Ovary (tissue), 10 donors: ENCODE measurements at regions of chr16 and their contacts with region 1.

Region 1: GRCh38 chr16:13397126-13397525 is 495.7 kb downstream of the SHISA9 start:
- DNase-seq: no peak
- H3K4me3 ChIP-seq: no peak overlapping the region
- H3K27ac ChIP-seq: no peak overlapping the region
- H3K4me1 ChIP-seq: no peaks in the 10 kb centered on the region
- H3K27me3 ChIP-seq: no peaks in the 10 kb centered on the region
- CTCF ChIP-seq: no peak
- EP300 ChIP-seq: no peak
- POLR2A ChIP-seq: no peak

Region 2: GRCh38 chr16:13351181-13351933 is 45.8 kb before region 1 on chr16:
- intact Hi-C with region 1: loop called in 1 of 4 experiments (anchors 1 kb)
- DNase-seq: no peak
- H3K4me3 ChIP-seq: no peak overlapping the region
- H3K27ac ChIP-seq: no peak overlapping the region
- H3K4me1 ChIP-seq: no peaks in the 10 kb centered on the region
- H3K27me3 ChIP-seq: no peaks in the 10 kb centered on the region
- CTCF ChIP-seq: no peak
- EP300 ChIP-seq: no peak
- POLR2A ChIP-seq: no peak

Region 3: GRCh38 chr16:13471036-13471435 is 73.9 kb after region 1 on chr16:
- intact Hi-C with region 1: no loop called
- DNase-seq: no peak
- H3K4me3 ChIP-seq: no peak overlapping the region
- H3K27ac ChIP-seq: no peak overlapping the region
- H3K4me1 ChIP-seq: no peaks in the 10 kb centered on the region
- H3K27me3 ChIP-seq: no peaks in the 10 kb centered on the region
- CTCF ChIP-seq: no peak
- EP300 ChIP-seq: no peak
- POLR2A ChIP-seq: no peak